ENCODE measurements at regions of chr3 and their contacts with region 1.

Region 1: DNA sequence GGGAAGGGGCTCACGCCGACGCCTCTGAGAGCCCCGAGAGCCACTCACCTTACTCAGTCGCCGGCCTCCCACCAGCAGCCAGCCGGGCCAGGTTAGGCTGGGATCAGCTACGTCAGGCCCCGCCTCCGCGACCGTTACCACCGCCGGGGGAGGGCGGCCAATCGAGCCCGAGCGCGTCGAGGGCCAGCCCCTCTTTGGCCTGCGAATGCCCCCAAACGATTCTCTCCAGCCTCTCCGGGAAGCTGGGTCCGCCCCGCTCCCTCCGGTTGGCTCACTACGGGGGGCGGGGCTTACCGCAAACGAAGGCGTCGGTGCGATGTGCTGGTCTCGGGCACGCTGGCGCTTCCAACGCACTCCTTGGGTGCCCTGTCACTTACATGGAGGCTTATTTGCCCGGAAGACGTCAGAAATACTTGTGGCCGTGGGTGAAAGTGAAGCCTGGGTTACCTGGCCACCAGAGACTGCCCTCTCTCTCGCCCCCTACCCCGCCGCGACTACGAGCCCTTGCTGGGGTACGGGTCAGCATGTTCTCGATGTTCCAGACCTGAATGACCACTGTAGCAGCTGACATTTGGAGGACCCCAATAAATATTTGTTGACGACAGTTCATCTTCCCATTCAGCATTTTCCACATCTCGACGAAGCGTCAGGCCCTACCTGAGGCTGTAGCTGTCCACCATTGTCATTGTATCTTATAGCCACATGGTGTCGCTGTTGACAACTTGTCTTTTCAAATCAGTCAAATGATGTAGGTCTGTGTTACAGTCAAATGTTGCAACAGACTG is at the start of gene CEP70:
- DNase-seq: peak; percentile 91
- H3K4me3 Mint-ChIP-seq: peak within 1 kb of the TSS; percentile 88
- H3K27ac Mint-ChIP-seq: peak within 1 kb of the TSS; percentile 92
- H3K4me1 Mint-ChIP-seq: peaks cover 21% of the 10 kb centered on the region
- H3K27me3 Mint-ChIP-seq: no peaks in the 10 kb centered on the region
- total RNA-seq, gene CEP70: 14.5 to 15.9 TPM

Region 2: DNA sequence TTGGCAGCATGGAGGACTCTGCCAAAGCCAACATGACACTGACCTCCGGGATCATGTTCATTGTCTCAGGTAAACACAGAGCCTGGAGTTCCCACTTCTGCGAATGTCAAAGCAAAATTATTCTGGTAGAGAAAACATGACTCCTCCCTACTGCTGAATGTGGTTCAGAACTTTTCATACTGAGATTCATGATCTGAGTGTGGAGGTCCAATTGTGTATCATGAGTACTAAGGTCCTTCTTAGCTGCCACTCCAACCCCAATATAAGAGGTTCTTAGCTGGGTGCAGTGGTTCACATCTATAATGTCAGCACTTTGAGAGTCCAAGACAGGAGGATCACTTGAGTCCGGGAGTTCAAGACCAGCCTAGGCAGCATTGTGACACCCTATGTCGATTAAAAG is 570.6 kb before region 1 on chr3:
- CTCF ChIA-PET with region 1: no interaction called
- POLR2A ChIA-PET with region 1: no interaction called
- DNase-seq: no peak
- H3K4me3 Mint-ChIP-seq: no peak overlapping the region
- H3K27ac Mint-ChIP-seq: no peak overlapping the region
- H3K4me1 Mint-ChIP-seq: no peaks in the 10 kb centered on the region
- H3K27me3 Mint-ChIP-seq: no peaks in the 10 kb centered on the region

Region 3: DNA sequence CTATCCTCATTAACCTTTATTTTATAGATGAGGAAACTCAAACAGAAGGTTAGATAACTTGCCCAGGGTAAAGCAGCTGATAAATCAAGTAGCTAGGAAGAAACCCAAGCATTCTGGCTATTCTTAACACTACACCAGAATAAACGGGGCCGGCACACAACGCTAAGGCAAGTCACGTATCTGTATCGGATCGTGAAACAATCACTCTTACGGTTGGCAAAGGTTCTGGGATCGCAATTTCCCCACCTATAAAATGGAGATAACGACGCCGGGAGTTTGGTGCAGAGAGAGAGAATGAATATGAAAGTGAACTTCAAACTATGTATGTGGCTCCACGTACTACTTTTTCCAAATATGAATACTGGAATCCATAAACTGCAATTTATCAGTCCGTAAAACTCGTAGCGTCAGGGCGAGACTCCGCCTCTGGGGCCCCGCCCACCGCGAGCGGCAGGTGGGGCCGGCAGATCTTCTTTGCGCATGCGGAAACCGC is 407.5 kb before region 1 on chr3:
- CTCF ChIA-PET with region 1: no interaction called
- POLR2A ChIA-PET with region 1: no interaction called
- DNase-seq: peak; percentile 91
- H3K4me3 Mint-ChIP-seq: peak overlapping the region; percentile 90
- H3K27ac Mint-ChIP-seq: peak overlapping the region; percentile 98
- H3K4me1 Mint-ChIP-seq: peaks cover 36% of the 10 kb centered on the region
- H3K27me3 Mint-ChIP-seq: peaks cover 14% of the 10 kb centered on the region

Region 4: DNA sequence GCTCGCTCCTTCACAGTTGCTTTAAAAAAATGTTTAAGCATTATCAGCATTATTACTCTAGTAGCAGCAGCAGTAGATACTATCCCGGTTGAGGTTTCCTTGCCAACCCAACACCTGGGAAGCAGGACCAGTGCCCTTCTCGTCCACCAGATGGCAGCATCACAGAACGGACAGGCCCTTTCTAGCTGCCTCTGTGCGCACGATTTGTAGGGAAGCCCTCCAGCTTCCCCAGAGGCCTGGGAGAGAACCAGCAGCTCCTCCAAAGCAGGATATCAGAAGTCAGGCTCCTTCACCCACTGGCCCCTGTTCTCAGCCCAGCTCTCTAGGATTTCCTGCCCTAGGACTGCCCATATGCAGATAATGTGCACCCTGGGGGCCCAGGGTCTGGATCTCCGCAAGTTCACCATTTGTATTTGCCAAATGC is 176.8 kb before region 1 on chr3:
- CTCF ChIA-PET with region 1: no interaction called
- POLR2A ChIA-PET with region 1: no interaction called
- DNase-seq: peak; percentile 71
- H3K4me3 Mint-ChIP-seq: no peak overlapping the region
- H3K27ac Mint-ChIP-seq: no peak overlapping the region
- H3K4me1 Mint-ChIP-seq: no peaks in the 10 kb centered on the region
- H3K27me3 Mint-ChIP-seq: peaks cover 5% of the 10 kb centered on the region

Region 5: GRCh38 chr3:138567401-138567800 is 26.9 kb before region 1 on chr3:
- CTCF ChIA-PET with region 1: no interaction called
- POLR2A ChIA-PET with region 1: no interaction called
- DNase-seq: no peak
- H3K4me3 Mint-ChIP-seq: no peak overlapping the region
- H3K27ac Mint-ChIP-seq: no peak overlapping the region
- H3K4me1 Mint-ChIP-seq: peaks cover 17% of the 10 kb centered on the region
- H3K27me3 Mint-ChIP-seq: no peaks in the 10 kb centered on the region

Region 6: GRCh38 chr3:138578141-138578540 is 16.2 kb before region 1 on chr3:
- CTCF ChIA-PET with region 1: interaction called, 12 read pairs
- POLR2A ChIA-PET with region 1: no interaction called
- DNase-seq: no peak
- H3K4me3 Mint-ChIP-seq: peak overlapping the region; percentile 4
- H3K27ac Mint-ChIP-seq: peak overlapping the region; percentile 77
- H3K4me1 Mint-ChIP-seq: peaks cover 23% of the 10 kb centered on the region
- H3K27me3 Mint-ChIP-seq: no peaks in the 10 kb centered on the region

Region 7: DNA sequence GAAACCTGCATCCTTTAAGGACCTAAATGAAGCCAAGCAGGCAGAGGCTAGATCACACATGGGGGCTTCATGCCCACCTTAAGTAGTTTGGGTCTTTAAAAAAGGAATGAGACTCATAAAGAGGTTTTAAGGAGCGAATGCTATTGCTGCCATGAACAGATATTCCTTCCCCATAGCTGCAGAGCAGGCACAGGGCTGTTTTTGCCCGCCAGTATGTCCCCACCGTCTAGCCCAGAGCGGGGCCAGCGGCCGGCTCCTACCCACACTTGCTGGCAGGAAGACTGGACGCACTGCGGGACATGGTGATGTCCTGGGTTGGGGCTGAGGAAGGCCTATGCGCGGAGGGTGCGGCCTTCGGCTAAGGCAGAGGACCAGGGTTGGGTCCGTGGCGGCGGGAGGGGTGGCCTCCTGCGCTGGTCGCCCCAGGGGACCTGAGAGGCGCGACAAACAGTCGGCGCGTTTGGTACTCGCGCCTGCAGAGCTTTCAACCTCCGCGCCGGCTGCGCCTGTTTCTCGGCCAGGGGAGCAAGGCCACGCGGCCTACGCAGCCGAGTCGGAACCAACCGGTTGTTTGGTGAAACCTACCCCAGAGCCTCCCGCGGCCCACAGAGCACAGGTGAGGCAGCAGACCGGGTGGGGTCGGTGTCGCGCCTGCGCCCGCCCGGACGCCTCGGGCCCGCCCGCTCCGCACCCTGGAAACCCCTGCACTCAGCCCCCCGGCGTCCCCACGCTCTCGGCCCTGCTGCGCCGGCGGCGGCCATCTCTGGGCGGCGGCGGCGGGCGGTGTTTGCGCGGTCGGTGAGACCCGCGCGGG is 14.2 kb after region 1 on chr3 and contains the start of gene FAIM:
- CTCF ChIA-PET with region 1: interaction called, 10 read pairs
- POLR2A ChIA-PET with region 1: no interaction called
- DNase-seq: peak; percentile 66
- H3K4me3 Mint-ChIP-seq: peak within 1 kb of the TSS; percentile 76
- H3K27ac Mint-ChIP-seq: peak within 1 kb of the TSS; percentile 91
- H3K4me1 Mint-ChIP-seq: peaks cover 18% of the 10 kb centered on the region
- H3K27me3 Mint-ChIP-seq: peaks cover 3% of the 10 kb centered on the region
- total RNA-seq, gene FAIM: 1.8 to 3.7 TPM

Region 8: GRCh38 chr3:138923531-138923994 is 329.2 kb after region 1 on chr3:
- CTCF ChIA-PET with region 1: interaction called, 31 read pairs
- POLR2A ChIA-PET with region 1: no interaction called
- DNase-seq: peak; percentile 90
- H3K4me3 Mint-ChIP-seq: no peak overlapping the region
- H3K27ac Mint-ChIP-seq: no peak overlapping the region
- H3K4me1 Mint-ChIP-seq: no peaks in the 10 kb centered on the region
- H3K27me3 Mint-ChIP-seq: peaks cover 3% of the 10 kb centered on the region

Measured in activated CD4-positive, alpha-beta T cell treated with anti-CD3 and anti-CD28 coated beads, Interleukin-2, amount 10 ng/mL, durations not matched to agents 7 days and 5 days (primary cell).